ENCODE measurements at regions of chr19 and their contacts with region 1.

Region 1: DNA sequence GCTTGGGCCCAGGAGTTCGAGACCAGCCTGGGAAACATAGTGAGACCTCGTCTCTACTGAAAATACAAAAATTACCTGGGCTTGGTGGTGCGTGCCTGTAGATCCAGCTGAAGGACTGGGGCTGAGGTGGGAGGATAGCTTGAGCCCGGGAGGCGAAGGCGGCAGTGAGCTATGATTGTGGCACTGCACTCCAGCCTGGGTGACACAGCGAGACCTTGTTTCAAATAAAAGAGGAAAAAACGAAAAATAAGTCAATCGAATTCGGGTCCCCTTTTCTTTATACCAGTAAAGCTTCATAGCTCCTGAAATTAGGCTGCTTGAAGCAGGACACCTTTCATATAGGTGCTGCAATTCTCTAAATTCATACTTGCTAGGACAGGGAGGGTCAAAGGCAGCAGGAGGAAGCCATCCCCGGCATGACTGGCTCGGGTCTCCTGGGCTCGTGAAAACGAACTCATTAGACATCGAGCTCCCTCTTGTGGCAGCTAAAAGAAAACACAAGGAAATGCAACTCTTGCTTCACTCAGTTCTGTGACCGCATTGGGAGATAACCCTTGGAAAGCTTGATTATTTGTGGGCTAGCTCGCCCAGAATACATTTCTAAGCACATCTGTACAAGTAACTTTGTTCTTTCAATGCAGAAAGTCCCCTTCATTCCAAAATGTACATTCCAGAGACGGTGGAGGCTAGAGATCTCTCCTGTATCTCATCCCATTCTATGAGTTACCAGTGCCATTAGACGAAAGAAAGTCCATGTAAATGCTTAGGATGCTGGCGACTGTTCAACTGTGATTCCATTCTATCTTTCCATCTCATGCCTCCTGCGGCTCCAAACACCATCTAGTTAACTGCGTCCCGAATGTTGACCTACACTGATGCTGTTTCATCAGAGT is 16.8 kb downstream of the FPR2 start:
- ATAC-seq: peak; percentile 93 to 100 (median 98)
- H3K4me3 ChIP-seq: no peak overlapping the region
- H3K27ac ChIP-seq: no peak overlapping the region
- H3K4me1 ChIP-seq: no peaks in the 10 kb centered on the region

Region 2: GRCh38 chr19:51473009-51473707 is 304.7 kb before region 1 on chr19:
- in situ Hi-C with region 1: loop called in 2 of 9 experiments (anchors 25 kb)
- ATAC-seq: peak; percentile 44 to 98 (median 63)
- H3K4me3 ChIP-seq: no peak overlapping the region
- H3K27ac ChIP-seq: no peak overlapping the region
- H3K4me1 ChIP-seq: no peaks in the 10 kb centered on the region

Region 3: GRCh38 chr19:51726049-51726448 is 51.8 kb before region 1 on chr19:
- in situ Hi-C with region 1: loop called in 1 of 9 experiments (anchors 10 kb)
- ATAC-seq: peak; percentile 67 to 88 (median 84)
- H3K4me3 ChIP-seq: no peak overlapping the region
- H3K27ac ChIP-seq: no peak overlapping the region
- H3K4me1 ChIP-seq: peaks cover 10 to 24% of the 10 kb centered on the region in 2 donors

Measured in motor neuron (in vitro differentiated cells).